ENCODE measurements at regions of chr18 and their contacts with region 1.

Region 1: DNA sequence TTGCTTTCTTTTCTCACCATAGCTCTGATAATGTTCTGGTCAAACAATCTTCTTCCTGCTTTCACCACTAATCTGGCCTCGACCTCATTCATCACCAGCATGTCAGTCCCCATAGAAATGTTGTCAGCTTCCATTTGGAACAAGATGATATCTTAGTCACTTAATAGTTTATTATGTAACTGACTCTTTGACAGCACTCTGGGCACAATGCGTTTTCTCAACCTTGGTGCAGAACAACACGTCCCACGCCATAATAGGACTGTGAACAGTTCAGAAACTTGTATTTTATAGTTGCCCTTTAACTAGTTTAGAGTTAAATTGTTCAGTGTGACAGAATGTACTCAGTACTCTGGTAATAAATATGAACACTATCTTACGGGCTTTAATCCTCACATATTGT is 106.0 kb downstream of the MC4R start:
- DNase-seq: no peak
- H3K4me3 ChIP-seq: no peak overlapping the region
- H3K27ac ChIP-seq: no peak overlapping the region
- H3K4me1 ChIP-seq: peaks cover 0 to 9% (median 0%) of the 10 kb centered on the region in 4 donors
- H3K27me3 ChIP-seq: no peaks in the 10 kb centered on the region
- CTCF ChIP-seq: no peak
- EP300 ChIP-seq: no peak
- POLR2A ChIP-seq: no peak

Region 2: GRCh38 chr18:60322591-60322990 is 56.0 kb after region 1 on chr18:
- intact Hi-C with region 1: loop called (anchors 10 kb)
- DNase-seq: no peak
- H3K4me3 ChIP-seq: no peak overlapping the region
- H3K27ac ChIP-seq: no peak overlapping the region
- H3K4me1 ChIP-seq: no peaks in the 10 kb centered on the region
- H3K27me3 ChIP-seq: no peaks in the 10 kb centered on the region
- CTCF ChIP-seq: no peak
- EP300 ChIP-seq: no peak
- POLR2A ChIP-seq: no peak

Measured in esophagus muscularis mucosa (tissue), 4 donors.